MCF 10A (cell line): ENCODE measurements at regions of chr1 and their contacts with region 1.

Region 1: DNA sequence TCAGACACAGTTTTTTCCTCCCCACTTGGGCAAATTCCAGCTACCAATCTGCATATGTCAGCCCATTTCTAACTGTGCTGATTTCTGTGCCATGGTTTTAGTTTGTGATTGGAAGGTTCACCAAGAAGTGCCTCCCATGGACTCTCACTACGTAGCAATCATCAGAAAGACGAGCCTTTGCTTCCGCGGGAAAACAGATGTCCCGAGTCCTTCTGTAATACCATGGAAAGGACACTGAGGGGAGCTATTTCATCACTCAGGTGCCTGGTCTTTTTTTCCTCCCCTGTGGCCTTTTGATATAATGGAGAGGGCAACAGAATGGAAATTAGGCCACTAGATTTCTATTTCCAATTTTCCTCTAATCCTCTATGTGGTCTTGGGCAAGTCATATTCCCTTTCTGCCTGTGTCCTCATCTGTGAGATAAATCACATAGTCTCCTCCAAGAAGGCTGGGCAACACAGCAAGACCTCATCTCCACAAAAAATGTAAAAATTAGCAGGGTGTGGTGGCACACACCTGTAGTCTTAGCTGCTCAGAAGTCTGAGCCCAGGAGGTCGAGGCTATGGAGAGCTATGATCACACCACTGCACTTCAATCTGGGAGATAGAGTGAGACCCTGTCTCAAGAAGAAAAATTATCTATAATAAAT is 24.8 kb downstream of the LEMD1 start:
- DNase-seq: peak; percentile 87
- H3K4me3 Mint-ChIP-seq: no peak overlapping the region
- H3K27ac Mint-ChIP-seq: no peak overlapping the region
- H3K4me1 Mint-ChIP-seq: peaks cover 4% of the 10 kb centered on the region
- H3K27me3 Mint-ChIP-seq: peaks cover 27% of the 10 kb centered on the region
- CTCF ChIP-seq: peak; percentile 99

Region 2: GRCh38 chr1:205335643-205336091 is 61.4 kb before region 1 on chr1:
- CTCF ChIA-PET with region 1: interaction called, 29 read pairs
- POLR2A ChIA-PET with region 1: no interaction called
- intact Hi-C with region 1: loop called (anchors 1 kb)
- DNase-seq: peak; percentile 97
- H3K4me3 Mint-ChIP-seq: no peak overlapping the region
- H3K27ac Mint-ChIP-seq: no peak overlapping the region
- H3K4me1 Mint-ChIP-seq: peaks cover 4% of the 10 kb centered on the region
- H3K27me3 Mint-ChIP-seq: peaks cover 17% of the 10 kb centered on the region
- CTCF ChIP-seq: peak; percentile 100

Region 3: GRCh38 chr1:205410581-205411298 is 13.6 kb after region 1 on chr1:
- CTCF ChIA-PET with region 1: interaction called, 16 read pairs
- POLR2A ChIA-PET with region 1: interaction called, 3 read pairs
- intact Hi-C with region 1: no loop called
- DNase-seq: no peak
- H3K4me3 Mint-ChIP-seq: no peak overlapping the region
- H3K27ac Mint-ChIP-seq: no peak overlapping the region
- H3K4me1 Mint-ChIP-seq: no peaks in the 10 kb centered on the region
- H3K27me3 Mint-ChIP-seq: peaks cover 52% of the 10 kb centered on the region
- CTCF ChIP-seq: no peak

Region 4: DNA sequence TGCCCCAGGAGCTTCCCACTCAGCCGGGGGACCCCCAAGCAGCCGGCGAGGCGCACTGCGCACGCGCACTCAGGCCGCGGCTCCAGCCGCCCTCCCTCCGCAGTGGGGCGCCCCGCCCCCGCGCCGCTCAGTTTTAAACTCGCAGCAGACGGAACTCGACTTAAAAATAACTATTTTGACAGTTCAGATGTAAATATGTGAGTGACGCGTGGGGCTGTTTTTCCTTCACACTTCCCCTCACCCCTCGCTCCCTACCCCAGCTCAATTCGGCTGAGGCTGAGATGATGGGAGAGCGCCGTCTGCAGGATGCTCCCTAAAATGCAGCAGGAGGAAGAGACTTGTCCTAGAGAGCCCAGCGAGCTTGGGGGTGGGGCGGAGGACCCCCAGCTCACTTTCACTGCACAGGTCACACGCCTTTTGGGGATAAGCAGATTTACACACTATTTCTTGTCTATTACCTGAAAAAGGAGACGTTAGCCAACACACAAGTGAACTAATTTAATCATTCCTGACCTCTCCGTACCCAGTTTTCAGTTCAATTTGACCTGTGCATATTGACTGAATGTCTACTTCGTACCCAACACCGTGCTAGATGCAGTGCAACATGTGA is 33.7 kb after region 1 on chr1:
- CTCF ChIA-PET with region 1: interaction called, 17 read pairs
- POLR2A ChIA-PET with region 1: no interaction called
- intact Hi-C with region 1: no loop called
- DNase-seq: peak; percentile 50
- H3K4me3 Mint-ChIP-seq: peak overlapping the region; percentile 56
- H3K27ac Mint-ChIP-seq: no peak overlapping the region
- H3K4me1 Mint-ChIP-seq: no peaks in the 10 kb centered on the region
- H3K27me3 Mint-ChIP-seq: peaks cover 56% of the 10 kb centered on the region
- CTCF ChIP-seq: peak; percentile 89

Region 5: GRCh38 chr1:205493241-205494085 is 96.4 kb after region 1 on chr1:
- CTCF ChIA-PET with region 1: interaction called, 207 read pairs
- POLR2A ChIA-PET with region 1: interaction called, 4 read pairs
- intact Hi-C with region 1: no loop called
- DNase-seq: peak; percentile 99
- H3K4me3 Mint-ChIP-seq: peak overlapping the region; percentile 53
- H3K27ac Mint-ChIP-seq: peak overlapping the region; percentile 86
- H3K4me1 Mint-ChIP-seq: peaks cover 38% of the 10 kb centered on the region
- H3K27me3 Mint-ChIP-seq: no peaks in the 10 kb centered on the region
- CTCF ChIP-seq: no peak

Region 6: GRCh38 chr1:205616563-205617293 is 219.6 kb after region 1 on chr1:
- CTCF ChIA-PET with region 1: no interaction called
- POLR2A ChIA-PET with region 1: no interaction called
- intact Hi-C with region 1: no loop called
- DNase-seq: no peak
- H3K4me3 Mint-ChIP-seq: no peak overlapping the region
- H3K27ac Mint-ChIP-seq: no peak overlapping the region
- H3K4me1 Mint-ChIP-seq: peaks cover 6% of the 10 kb centered on the region
- H3K27me3 Mint-ChIP-seq: no peaks in the 10 kb centered on the region
- CTCF ChIP-seq: no peak

Region 7: GRCh38 chr1:205693421-205693991 is 296.4 kb after region 1 on chr1:
- CTCF ChIA-PET with region 1: no interaction called
- POLR2A ChIA-PET with region 1: no interaction called
- intact Hi-C with region 1: no loop called
- DNase-seq: no peak
- H3K4me3 Mint-ChIP-seq: no peak overlapping the region
- H3K27ac Mint-ChIP-seq: no peak overlapping the region
- H3K4me1 Mint-ChIP-seq: peaks cover 8% of the 10 kb centered on the region
- H3K27me3 Mint-ChIP-seq: peaks cover 14% of the 10 kb centered on the region
- CTCF ChIP-seq: no peak

Region 8: DNA sequence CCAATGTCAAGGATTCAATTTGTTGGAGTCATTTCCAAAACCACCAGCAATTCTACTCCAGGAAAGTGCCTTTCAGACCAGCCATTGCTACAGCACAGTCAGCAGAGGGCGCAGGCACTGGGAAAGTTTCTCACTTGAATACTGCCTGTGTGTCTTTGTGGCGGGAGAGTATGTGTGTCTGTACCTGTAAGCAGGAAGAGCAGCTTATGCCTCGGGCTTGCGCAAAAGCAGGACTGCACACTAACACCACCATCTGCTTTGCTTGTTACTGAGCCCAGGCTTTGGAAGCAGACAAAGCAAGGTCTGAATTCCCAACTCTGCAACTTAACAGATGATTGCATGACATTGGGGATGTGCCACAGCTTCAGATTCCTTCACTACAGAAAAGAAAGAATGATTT is 633.6 kb after region 1 on chr1:
- CTCF ChIA-PET with region 1: no interaction called
- POLR2A ChIA-PET with region 1: no interaction called
- intact Hi-C with region 1: no loop called
- DNase-seq: peak; percentile 95
- H3K4me3 Mint-ChIP-seq: no peak overlapping the region
- H3K27ac Mint-ChIP-seq: no peak overlapping the region
- H3K4me1 Mint-ChIP-seq: peaks cover 32% of the 10 kb centered on the region
- H3K27me3 Mint-ChIP-seq: peaks cover 11% of the 10 kb centered on the region
- CTCF ChIP-seq: peak; percentile 95